ENCODE measurements at regions of chr14 and their contacts with region 1.

Region 1: GRCh38 chr14:91996948-91997371 is 42.9 kb downstream of the TRIP11 start:
- DNase-seq: peak in 2 of 9 experiments; percentile 57 to 68
- ATAC-seq: peak; percentile 52
- H3K4me3 ChIP-seq: no peak overlapping the region
- H3K4me3 Mint-ChIP-seq: no peak overlapping the region
- H3K27ac ChIP-seq: no peak overlapping the region
- H3K27ac Mint-ChIP-seq: no peak overlapping the region
- H3K4me1 ChIP-seq: peaks cover 34% of the 10 kb centered on the region
- H3K4me1 Mint-ChIP-seq: peaks cover 40% of the 10 kb centered on the region
- H3K27me3 ChIP-seq: no peaks in the 10 kb centered on the region
- H3K27me3 Mint-ChIP-seq: no peaks in the 10 kb centered on the region
- CTCF ChIP-seq: peak; percentile 75

Region 2: DNA sequence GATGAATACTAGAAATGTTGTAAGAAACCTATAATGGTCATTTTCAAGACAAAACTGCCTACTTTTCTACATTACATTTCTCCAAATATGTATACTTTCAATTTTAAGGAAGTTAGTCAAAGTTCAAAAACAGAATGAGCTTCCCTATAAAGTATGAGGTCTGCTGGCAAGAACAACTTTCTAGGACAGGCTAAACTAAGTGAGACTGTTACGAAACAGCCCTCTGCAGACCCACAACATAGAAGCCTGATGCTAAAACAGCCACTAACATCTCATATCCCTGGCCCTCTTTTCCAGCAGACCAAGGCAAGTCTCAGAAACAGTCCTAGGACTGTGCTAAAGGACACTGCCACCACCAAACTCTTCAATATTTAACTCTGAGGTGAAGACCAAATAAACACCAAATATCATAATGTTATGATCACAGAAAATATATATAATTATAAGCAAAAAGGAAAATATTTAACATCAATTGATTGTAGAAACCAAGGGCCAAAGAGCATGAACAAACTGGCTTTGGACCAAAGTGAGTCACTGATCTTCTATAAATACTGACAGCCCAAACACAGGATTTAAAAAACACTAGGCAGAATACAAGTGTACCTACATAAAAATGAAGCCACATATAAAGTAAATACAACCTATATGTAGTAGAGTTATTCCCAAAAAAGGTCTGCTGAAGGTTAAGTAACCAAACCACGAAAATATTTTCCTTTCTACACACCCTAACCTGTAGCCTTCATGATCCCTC is 514.5 kb before region 1 on chr14:
- CTCF ChIA-PET with region 1: no interaction called
- POLR2A ChIA-PET with region 1: no interaction called
- intact Hi-C with region 1: loop called in 1 of 2 experiments (anchors 5 kb)
- DNase-seq: no peak
- ATAC-seq: no peak
- H3K4me3 ChIP-seq: no peak overlapping the region
- H3K4me3 Mint-ChIP-seq: no peak overlapping the region
- H3K27ac ChIP-seq: no peak overlapping the region
- H3K27ac Mint-ChIP-seq: peak overlapping the region; percentile 38
- H3K4me1 ChIP-seq: peaks cover 7% of the 10 kb centered on the region
- H3K4me1 Mint-ChIP-seq: peaks cover 78% of the 10 kb centered on the region
- H3K27me3 ChIP-seq: no peaks in the 10 kb centered on the region
- H3K27me3 Mint-ChIP-seq: no peaks in the 10 kb centered on the region
- CTCF ChIP-seq: no peak

Region 3: DNA sequence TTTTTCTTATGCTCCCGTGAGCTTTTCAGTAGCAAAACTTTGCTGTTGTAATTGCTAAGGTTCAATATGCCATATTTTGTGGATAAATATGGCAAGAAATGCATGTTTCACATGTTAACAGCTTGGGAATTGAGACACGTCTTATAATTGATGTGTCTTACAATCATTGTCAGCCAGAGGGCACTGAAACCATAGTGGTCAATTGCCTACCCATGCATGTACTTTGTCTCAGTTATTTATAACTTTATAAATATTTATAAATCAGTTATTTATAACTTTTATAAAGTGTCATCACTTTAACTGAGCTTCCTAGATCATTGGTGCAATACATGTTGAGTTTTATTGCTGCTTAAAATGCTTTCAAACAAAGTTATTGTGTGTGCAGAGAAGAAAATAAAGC is 347.0 kb before region 1 on chr14:
- CTCF ChIA-PET with region 1: interaction called, 10 read pairs
- POLR2A ChIA-PET with region 1: no interaction called
- intact Hi-C with region 1: loop called (anchors 1 kb)
- DNase-seq: peak in 4 of 9 experiments; percentile 20 to 60 (median 36)
- ATAC-seq: peak; percentile 52
- H3K4me3 ChIP-seq: no peak overlapping the region
- H3K4me3 Mint-ChIP-seq: no peak overlapping the region
- H3K27ac ChIP-seq: no peak overlapping the region
- H3K27ac Mint-ChIP-seq: no peak overlapping the region
- H3K4me1 ChIP-seq: no peaks in the 10 kb centered on the region
- H3K4me1 Mint-ChIP-seq: no peaks in the 10 kb centered on the region
- H3K27me3 ChIP-seq: no peaks in the 10 kb centered on the region
- H3K27me3 Mint-ChIP-seq: no peaks in the 10 kb centered on the region
- CTCF ChIP-seq: peak; percentile 64

Region 4: GRCh38 chr14:91714805-91715204 is 282.2 kb before region 1 on chr14:
- CTCF ChIA-PET with region 1: no interaction called
- POLR2A ChIA-PET with region 1: no interaction called
- intact Hi-C with region 1: loop called in 1 of 2 experiments (anchors 5 kb)
- DNase-seq: peak in 8 of 9 experiments; percentile 27 to 69 (median 54)
- ATAC-seq: peak; percentile 99
- H3K4me3 ChIP-seq: no peak overlapping the region
- H3K4me3 Mint-ChIP-seq: peak overlapping the region; percentile 70
- H3K27ac ChIP-seq: no peak overlapping the region
- H3K27ac Mint-ChIP-seq: peak overlapping the region; percentile 72
- H3K4me1 ChIP-seq: peaks cover 13% of the 10 kb centered on the region
- H3K4me1 Mint-ChIP-seq: peaks cover 17% of the 10 kb centered on the region
- H3K27me3 ChIP-seq: no peaks in the 10 kb centered on the region
- H3K27me3 Mint-ChIP-seq: no peaks in the 10 kb centered on the region
- CTCF ChIP-seq: peak; percentile 19

Region 5: DNA sequence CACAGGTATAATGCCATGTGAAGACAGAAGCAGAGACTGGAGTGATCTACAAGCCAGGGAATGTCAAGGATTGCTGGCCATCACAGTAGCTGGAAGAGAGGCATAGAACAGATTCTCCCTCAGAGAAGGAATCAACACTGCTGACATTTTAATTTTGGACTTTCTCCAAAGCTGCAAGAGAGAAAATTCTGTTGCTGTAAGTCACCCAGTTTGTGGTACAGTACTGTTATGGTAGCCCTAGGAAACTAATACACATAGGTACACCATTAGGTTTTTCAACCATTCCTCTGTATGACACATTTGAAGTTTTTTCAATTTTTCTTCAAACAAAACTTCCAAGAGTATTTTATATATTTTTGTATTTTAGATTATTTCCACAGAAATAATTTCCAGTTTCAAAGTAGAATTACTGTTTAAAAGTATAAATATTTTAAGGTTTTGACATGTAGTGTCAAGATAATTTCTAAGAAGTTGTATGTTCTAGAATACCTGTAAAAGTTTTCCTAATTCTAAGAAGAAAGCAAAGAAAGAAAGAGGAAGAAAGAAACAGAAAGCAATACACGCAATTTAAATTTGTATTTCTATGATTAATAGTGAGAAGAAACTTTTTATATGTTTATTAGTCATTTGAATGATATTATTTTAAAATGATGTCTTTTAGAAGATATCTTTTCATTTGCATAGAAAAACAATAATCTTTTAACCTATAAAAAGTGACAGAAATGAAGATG is 200.2 kb before region 1 on chr14:
- CTCF ChIA-PET with region 1: no interaction called
- POLR2A ChIA-PET with region 1: no interaction called
- intact Hi-C with region 1: loop called in 1 of 2 experiments (anchors 10 kb)
- DNase-seq: no peak
- ATAC-seq: no peak
- H3K4me3 ChIP-seq: no peak overlapping the region
- H3K4me3 Mint-ChIP-seq: no peak overlapping the region
- H3K27ac ChIP-seq: no peak overlapping the region
- H3K27ac Mint-ChIP-seq: peak overlapping the region; percentile 80
- H3K4me1 ChIP-seq: no peaks in the 10 kb centered on the region
- H3K4me1 Mint-ChIP-seq: peaks cover 33% of the 10 kb centered on the region
- H3K27me3 ChIP-seq: no peaks in the 10 kb centered on the region
- H3K27me3 Mint-ChIP-seq: no peaks in the 10 kb centered on the region
- CTCF ChIP-seq: no peak

Region 6: DNA sequence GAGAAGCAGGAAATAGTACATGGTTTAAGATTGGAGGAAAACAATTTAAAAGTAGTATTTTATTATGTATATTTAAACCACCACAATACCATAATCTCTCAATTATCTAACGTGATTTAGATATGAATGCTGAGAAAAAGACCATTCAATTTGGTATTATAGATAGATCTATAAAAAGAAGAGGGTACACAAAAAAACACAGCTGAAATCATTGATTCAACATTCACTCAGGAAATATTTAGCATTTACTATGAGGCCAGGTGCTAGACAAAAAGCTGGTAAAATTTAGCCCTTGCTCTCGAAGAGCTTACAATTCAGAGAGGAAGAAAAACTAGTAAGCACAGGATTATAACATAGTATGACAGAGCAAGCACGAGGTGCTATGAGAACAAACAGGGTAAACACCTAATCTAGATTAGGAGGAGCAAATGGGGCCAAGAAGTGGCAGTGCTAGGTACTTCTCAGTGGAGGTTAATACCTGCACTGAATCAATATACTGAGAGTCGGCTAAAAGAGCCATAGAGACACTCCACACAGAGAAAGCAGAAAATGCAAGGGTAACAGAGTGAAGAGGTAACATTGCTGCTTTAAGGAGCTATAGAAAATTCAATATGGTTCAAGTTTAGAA is 15.3 kb after region 1 on chr14:
- CTCF ChIA-PET with region 1: interaction called, 13 read pairs
- POLR2A ChIA-PET with region 1: no interaction called
- intact Hi-C with region 1: no loop called
- DNase-seq: no peak
- ATAC-seq: no peak
- H3K4me3 ChIP-seq: no peak overlapping the region
- H3K4me3 Mint-ChIP-seq: no peak overlapping the region
- H3K27ac ChIP-seq: no peak overlapping the region
- H3K27ac Mint-ChIP-seq: no peak overlapping the region
- H3K4me1 ChIP-seq: no peaks in the 10 kb centered on the region
- H3K4me1 Mint-ChIP-seq: peaks cover 10% of the 10 kb centered on the region
- H3K27me3 ChIP-seq: no peaks in the 10 kb centered on the region
- H3K27me3 Mint-ChIP-seq: no peaks in the 10 kb centered on the region
- CTCF ChIP-seq: no peak

Region 7: DNA sequence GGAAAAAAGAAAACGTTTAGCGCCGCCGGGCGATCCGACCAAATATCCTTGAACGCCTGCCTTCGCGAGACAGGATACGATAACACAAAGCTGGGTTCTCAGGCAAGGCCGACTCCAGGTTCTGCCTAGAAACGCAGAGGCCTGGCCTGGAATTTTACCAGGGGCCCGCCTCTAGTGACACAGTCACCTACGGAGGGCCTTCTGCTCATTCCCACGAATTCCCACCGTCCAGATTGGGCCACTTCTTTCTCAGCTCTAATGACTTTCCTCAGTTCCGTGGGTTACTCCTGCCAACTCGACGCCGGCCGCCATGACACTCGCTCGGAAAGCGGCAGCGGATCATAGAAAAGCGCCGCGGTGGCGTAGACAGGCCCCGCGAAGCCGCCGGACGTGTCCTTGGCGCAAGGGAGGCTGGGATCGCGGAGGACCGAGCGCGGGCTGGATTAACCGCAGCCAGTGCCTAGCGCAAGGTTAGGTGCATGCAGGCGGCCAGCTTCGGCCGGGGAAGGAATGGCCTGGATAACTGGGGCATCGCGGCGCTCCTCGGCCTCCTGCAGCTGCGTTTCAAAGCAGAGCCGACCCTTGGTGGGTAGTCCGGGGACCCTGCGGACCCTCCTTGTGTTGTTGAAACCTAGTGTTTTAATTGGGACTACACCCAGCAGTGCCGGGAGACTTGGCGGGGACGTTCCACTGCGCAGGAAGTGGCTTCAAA is 42.9 kb after region 1 on chr14 and contains the start of gene TRIP11:
- CTCF ChIA-PET with region 1: interaction called, 8 read pairs
- POLR2A ChIA-PET with region 1: interaction called, 7 read pairs
- intact Hi-C with region 1: loop called in 1 of 2 experiments (anchors 5 kb)
- DNase-seq: peak; percentile 93 to 97 (median 95)
- ATAC-seq: peak; percentile 86
- H3K4me3 ChIP-seq: peak within 1 kb of the TSS; percentile 86 to 93
- H3K4me3 Mint-ChIP-seq: peak within 1 kb of the TSS; percentile 95
- H3K27ac ChIP-seq: peak within 1 kb of the TSS; percentile 94 to 96
- H3K27ac Mint-ChIP-seq: peak within 1 kb of the TSS; percentile 100
- H3K4me1 ChIP-seq: peaks cover 34% of the 10 kb centered on the region
- H3K4me1 Mint-ChIP-seq: peaks cover 51% of the 10 kb centered on the region
- H3K27me3 ChIP-seq: no peaks in the 10 kb centered on the region
- H3K27me3 Mint-ChIP-seq: no peaks in the 10 kb centered on the region
- CTCF ChIP-seq: no peak
- total RNA-seq, gene TRIP11: 25.3 to 26.5 TPM